ENCODE measurements at regions of chr3 and their contacts with region 1.

Region 1: GRCh38 chr3:171383206-171384018 is 76.8 kb downstream of the TNIK start:
- DNase-seq: no peak
- ATAC-seq: no peak
- H3K4me3 ChIP-seq: no peak overlapping the region
- H3K4me3 Mint-ChIP-seq: no peak overlapping the region
- H3K27ac ChIP-seq: no peak overlapping the region
- H3K27ac Mint-ChIP-seq: peak overlapping the region; percentile 43 to 54
- H3K4me1 ChIP-seq: peaks cover 4 to 12% of the 10 kb centered on the region in 2 experiments
- H3K4me1 Mint-ChIP-seq: peaks cover 75 to 84% (median 79%) of the 10 kb centered on the region in 3 donors
- H3K27me3 ChIP-seq: no peaks in the 10 kb centered on the region
- H3K27me3 Mint-ChIP-seq: no peaks in the 10 kb centered on the region

Region 2: GRCh38 chr3:171172070-171172469 is 211.3 kb before region 1 on chr3:
- CTCF ChIA-PET with region 1: no interaction called
- POLR2A ChIA-PET with region 1: no interaction called
- DNase-seq: peak in 7 of 35 experiments; percentile 6 to 33 (median 15)
- ATAC-seq: no peak
- H3K4me3 ChIP-seq: no peak overlapping the region
- H3K4me3 Mint-ChIP-seq: no peak overlapping the region
- H3K27ac ChIP-seq: no peak overlapping the region
- H3K27ac Mint-ChIP-seq: no peak overlapping the region
- H3K4me1 ChIP-seq: no peaks in the 10 kb centered on the region
- H3K4me1 Mint-ChIP-seq: peaks cover 5 to 25% (median 13%) of the 10 kb centered on the region in 3 donors
- H3K27me3 ChIP-seq: no peaks in the 10 kb centered on the region
- H3K27me3 Mint-ChIP-seq: no peaks in the 10 kb centered on the region

Region 3: GRCh38 chr3:171187706-171188290 is 195.6 kb before region 1 on chr3:
- CTCF ChIA-PET with region 1: no interaction called
- POLR2A ChIA-PET with region 1: no interaction called
- DNase-seq: peak in 11 of 35 experiments; percentile 0 to 59 (median 6)
- ATAC-seq: peak in 2 of 4 experiments; percentile 40 to 60
- H3K4me3 ChIP-seq: no peak overlapping the region
- H3K4me3 Mint-ChIP-seq: no peak overlapping the region
- H3K27ac ChIP-seq: no peak overlapping the region
- H3K27ac Mint-ChIP-seq: no peak overlapping the region
- H3K4me1 ChIP-seq: peaks cover 0 to 3% of the 10 kb centered on the region in 2 experiments
- H3K4me1 Mint-ChIP-seq: peaks cover 18 to 36% (median 21%) of the 10 kb centered on the region in 3 donors
- H3K27me3 ChIP-seq: no peaks in the 10 kb centered on the region
- H3K27me3 Mint-ChIP-seq: no peaks in the 10 kb centered on the region

Region 4: GRCh38 chr3:171470714-171471227 is 87.4 kb after region 1 on chr3:
- CTCF ChIA-PET with region 1: no interaction called
- POLR2A ChIA-PET with region 1: no interaction called
- DNase-seq: no peak
- ATAC-seq: no peak
- H3K4me3 ChIP-seq: no peak overlapping the region
- H3K4me3 Mint-ChIP-seq: no peak overlapping the region
- H3K27ac ChIP-seq: no peak overlapping the region
- H3K27ac Mint-ChIP-seq: no peak overlapping the region
- H3K4me1 ChIP-seq: no peaks in the 10 kb centered on the region
- H3K4me1 Mint-ChIP-seq: no peaks in the 10 kb centered on the region
- H3K27me3 ChIP-seq: no peaks in the 10 kb centered on the region
- H3K27me3 Mint-ChIP-seq: no peaks in the 10 kb centered on the region

Region 5: GRCh38 chr3:172946061-172946460 is 1562.6 kb after region 1 on chr3:
- CTCF ChIA-PET with region 1: no interaction called
- POLR2A ChIA-PET with region 1: interaction called in 1 of 2 experiments, 12 read pairs
- DNase-seq: no peak
- ATAC-seq: no peak
- H3K4me3 ChIP-seq: no peak overlapping the region
- H3K4me3 Mint-ChIP-seq: no peak overlapping the region
- H3K27ac ChIP-seq: no peak overlapping the region
- H3K27ac Mint-ChIP-seq: no peak overlapping the region
- H3K4me1 ChIP-seq: no peaks in the 10 kb centered on the region
- H3K4me1 Mint-ChIP-seq: no peaks in the 10 kb centered on the region
- H3K27me3 ChIP-seq: peaks cover 0 to 2% of the 10 kb centered on the region in 2 experiments
- H3K27me3 Mint-ChIP-seq: no peaks in the 10 kb centered on the region

Measured in T-cell (primary cell).